Body of pancreas (tissue), 4 donors: ENCODE measurements at regions of chr3 and their contacts with region 1.

Region 1: DNA sequence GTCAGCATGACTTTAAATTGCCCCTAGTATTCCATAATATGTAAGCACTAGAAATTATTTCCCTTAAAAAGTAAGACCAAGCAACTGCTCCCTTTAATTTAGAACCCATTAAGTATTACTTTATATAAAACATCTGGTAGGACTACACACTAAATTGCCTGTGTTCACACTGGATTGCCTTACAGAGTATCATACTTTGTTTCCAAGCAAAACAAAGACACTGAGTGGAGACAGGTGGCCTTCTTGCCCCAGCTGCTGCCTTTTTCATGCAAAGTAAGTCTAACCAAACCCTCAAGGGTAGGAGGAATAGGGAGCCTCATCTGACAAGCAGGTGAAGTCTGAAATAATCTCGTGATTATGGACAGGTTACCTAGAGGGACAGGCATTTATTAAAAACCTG is 87.3 kb downstream of the PEX5L start:
- DNase-seq: no peak
- ATAC-seq: no peak
- H3K4me3 ChIP-seq: no peak overlapping the region
- H3K27ac ChIP-seq: no peak overlapping the region
- H3K4me1 ChIP-seq: no peaks in the 10 kb centered on the region
- H3K27me3 ChIP-seq: no peaks in the 10 kb centered on the region
- CTCF ChIP-seq: no peak
- POLR2A ChIP-seq: no peak

Region 2: GRCh38 chr3:180594631-180595558 is 645.5 kb after region 1 on chr3:
- intact Hi-C with region 1: loop called (anchors 10 kb)
- DNase-seq: no peak
- ATAC-seq: peak; percentile 80
- H3K4me3 ChIP-seq: no peak overlapping the region
- H3K27ac ChIP-seq: no peak overlapping the region
- H3K4me1 ChIP-seq: peaks cover 14% of the 10 kb centered on the region
- H3K27me3 ChIP-seq: no peaks in the 10 kb centered on the region
- CTCF ChIP-seq: peak; percentile 31 to 85 (median 73)
- POLR2A ChIP-seq: no peak